Psoas muscle (tissue), 8 donors: ENCODE measurements at regions of chr9 and their contacts with region 1.

Region 1: DNA sequence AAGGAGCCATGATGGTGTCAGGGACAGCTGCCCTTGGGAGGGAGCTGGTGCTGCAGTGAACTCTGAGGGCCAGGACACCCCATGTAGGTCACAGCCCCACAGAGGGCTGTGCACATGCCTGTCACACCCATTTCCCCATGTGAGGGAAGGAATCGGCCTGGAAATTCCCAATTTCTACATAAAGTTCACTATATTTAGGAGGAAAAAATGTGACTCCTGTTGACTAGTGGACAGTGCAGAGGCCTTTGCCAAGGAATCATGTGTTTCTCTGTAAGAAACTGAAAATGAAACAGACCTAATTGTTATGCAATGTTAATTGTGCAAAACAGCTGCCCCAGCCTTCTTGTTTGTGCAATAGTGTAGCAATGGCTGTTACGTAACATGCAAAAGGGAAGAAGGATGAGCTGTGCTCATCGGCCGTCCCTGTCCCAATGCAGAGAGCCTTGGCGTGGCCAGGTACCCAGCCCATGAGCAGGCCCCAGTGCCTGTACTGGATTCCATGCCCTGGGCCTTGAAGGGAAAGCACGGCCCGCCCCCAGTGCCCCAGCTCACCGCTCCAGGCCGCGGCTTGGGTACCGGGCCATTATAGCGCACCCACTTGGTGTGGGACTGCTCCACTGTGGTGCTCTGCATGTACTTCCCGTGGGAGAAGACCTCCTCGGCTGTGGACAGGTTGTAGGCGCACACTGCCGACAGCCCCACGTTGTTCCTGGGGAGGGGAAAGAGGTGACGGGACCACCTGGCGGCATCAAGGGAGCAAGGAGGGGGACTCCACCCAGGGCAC is 70.0 kb downstream of the SECISBP2 start:
- DNase-seq: peak; percentile 76 to 87
- ATAC-seq: peak; percentile 69 to 84 (median 82)
- H3K4me3 ChIP-seq: no peak overlapping the region
- H3K27ac ChIP-seq: peak overlapping the region; percentile 85
- H3K4me1 ChIP-seq: peaks cover 18% of the 10 kb centered on the region
- H3K27me3 ChIP-seq: no peaks in the 10 kb centered on the region
- CTCF ChIP-seq: no peak

Region 2: DNA sequence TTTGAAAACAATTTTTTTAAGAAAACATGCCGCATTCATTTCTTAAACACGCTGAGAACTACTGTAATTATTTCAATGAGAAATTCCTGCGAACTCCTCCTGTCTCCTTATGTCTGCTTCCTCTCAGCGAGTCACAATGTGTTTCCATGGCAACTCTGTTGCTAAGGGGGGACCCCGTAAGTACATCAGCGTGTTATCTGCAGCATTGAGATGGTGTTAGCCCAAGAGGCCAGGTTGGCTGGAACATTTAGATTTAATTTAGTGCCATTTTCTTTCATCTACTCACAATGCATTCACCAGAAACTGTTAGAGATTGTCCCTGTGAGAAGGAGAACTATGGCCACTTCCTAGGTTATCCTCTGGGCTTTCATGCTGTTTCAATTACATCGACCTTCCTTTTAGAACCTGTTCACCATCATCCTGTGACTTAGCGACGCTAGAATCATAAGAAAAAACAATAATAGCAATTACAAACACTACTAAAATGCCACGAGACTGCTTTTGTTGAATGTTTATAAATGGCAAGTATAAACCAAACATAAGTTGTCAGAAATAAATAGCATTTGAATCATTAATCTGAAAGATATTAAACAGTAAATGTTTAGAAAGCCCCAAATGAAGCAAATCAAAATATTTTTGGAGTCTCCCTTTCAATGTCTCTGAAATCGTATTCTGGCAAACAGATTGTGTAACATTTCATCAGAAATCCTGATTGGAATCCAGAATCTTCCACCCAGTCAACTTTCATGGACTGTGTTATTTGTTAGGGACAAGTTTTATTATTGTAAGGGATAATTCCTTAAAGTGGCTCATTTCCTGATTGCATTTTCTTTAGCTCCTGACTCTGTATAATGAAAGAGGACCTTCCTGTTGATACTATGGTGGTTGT is 170.0 kb before region 1 on chr9:
- intact Hi-C with region 1: no loop called
- DNase-seq: no peak
- ATAC-seq: no peak
- H3K4me3 ChIP-seq: no peak overlapping the region
- H3K27ac ChIP-seq: no peak overlapping the region
- H3K4me1 ChIP-seq: no peaks in the 10 kb centered on the region
- H3K27me3 ChIP-seq: no peaks in the 10 kb centered on the region
- CTCF ChIP-seq: no peak

Region 3: GRCh38 chr9:89497978-89498851 is 109.9 kb after region 1 on chr9 and contains the start of gene SEMA4D:
- intact Hi-C with region 1: loop called in 1 of 2 experiments (anchors 5 kb)
- DNase-seq: peak; percentile 72 to 75
- ATAC-seq: peak; percentile 65 to 80 (median 78)
- H3K4me3 ChIP-seq: peak within 1 kb of the TSS; percentile 79
- H3K27ac ChIP-seq: peak within 1 kb of the TSS; percentile 90
- H3K4me1 ChIP-seq: peaks cover 37% of the 10 kb centered on the region
- H3K27me3 ChIP-seq: no peaks in the 10 kb centered on the region
- CTCF ChIP-seq: no peak
- total RNA-seq, gene SEMA4D: 32.1 to 111 (median 63.6) TPM